SK-N-SH (cell line): ENCODE measurements at regions of chr6 and their contacts with region 1.

Region 1: DNA sequence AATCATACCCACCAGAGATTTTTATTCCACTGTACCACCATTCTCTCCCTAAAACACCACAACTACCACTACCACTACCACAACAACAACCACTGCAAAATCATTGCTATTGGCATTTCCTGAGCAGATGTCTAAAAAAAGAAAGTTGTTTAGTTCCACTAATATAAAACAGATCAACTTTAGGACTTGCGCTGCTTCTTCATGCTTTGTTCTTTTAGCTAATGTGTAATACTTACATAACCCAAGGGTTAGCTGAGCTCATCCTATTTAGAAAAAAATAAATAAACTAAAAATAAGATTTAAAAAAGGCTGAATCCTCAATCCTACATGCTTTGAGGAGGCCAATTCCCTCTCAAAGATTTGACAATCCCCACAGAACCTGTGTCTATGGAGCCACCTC is 11.4 kb downstream of the IYD start:
- DNase-seq: no peak
- H3K4me3 ChIP-seq: no peak overlapping the region
- H3K27ac ChIP-seq: no peak overlapping the region
- H3K4me1 ChIP-seq: no peaks in the 10 kb centered on the region
- H3K27me3 ChIP-seq: no peaks in the 10 kb centered on the region; the same call in 1 of the 2 replicates
- CTCF ChIP-seq: no peak
- EP300 ChIP-seq: no peak
- RAD21 ChIP-seq: no peak

Region 2: DNA sequence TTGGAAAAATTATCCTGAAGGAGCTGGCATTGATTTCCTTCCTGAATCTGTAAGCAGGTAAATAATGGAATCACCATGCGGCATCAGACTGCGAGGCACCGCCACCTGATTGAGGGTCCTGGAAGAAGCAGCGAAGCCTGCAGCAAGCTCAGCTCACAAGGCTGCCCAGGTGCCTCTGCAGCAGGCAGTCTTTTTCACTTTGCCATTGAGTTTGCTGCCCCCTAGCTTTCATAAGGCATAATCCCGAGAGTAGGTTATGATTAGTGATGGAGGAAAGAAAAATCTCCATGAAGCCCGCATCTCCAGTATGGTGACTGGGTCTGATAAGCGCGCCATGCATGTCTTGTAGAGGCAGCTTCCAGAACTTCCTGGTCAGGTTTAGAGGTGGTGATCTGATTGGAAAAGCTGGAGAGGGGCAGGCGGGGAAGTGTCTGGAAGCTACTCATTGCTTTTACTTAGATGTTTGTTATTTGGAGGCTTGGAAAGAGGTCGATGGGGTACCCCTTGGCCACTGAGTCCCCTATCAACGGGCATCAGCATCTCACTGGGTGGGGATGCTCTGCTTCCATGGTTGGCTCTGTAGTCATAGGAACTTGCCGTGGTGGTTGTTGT is 15.2 kb after region 1 on chr6:
- CTCF ChIA-PET with region 1: interaction called, 14 read pairs
- POLR2A ChIA-PET with region 1: no interaction called
- DNase-seq: peak; percentile 43
- H3K4me3 ChIP-seq: no peak overlapping the region; a peak in 1 of 4 replicates
- H3K27ac ChIP-seq: no peak overlapping the region
- H3K4me1 ChIP-seq: no peaks in the 10 kb centered on the region
- H3K27me3 ChIP-seq: peaks cover 23% of the 10 kb centered on the region; the same call in 1 of the 2 replicates
- CTCF ChIP-seq: peak; percentile 66
- EP300 ChIP-seq: no peak
- RAD21 ChIP-seq: peak; percentile 62